ENCODE measurements at regions of chr16 and their contacts with region 1.

Region 1: GRCh38 chr16:54929090-54930004 is 1.3 kb upstream of the IRX5 start:
- DNase-seq: peak; percentile 100
- H3K4me3 ChIP-seq: peak overlapping the region; percentile 76
- H3K4me3 Mint-ChIP-seq: peak overlapping the region; percentile 96
- H3K27ac Mint-ChIP-seq: peak overlapping the region; percentile 89
- H3K4me1 ChIP-seq: peaks cover 24% of the 10 kb centered on the region
- H3K4me1 Mint-ChIP-seq: peaks cover 27% of the 10 kb centered on the region
- H3K27me3 ChIP-seq: no peaks in the 10 kb centered on the region
- H3K27me3 Mint-ChIP-seq: no peaks in the 10 kb centered on the region
- CTCF ChIP-seq: peak in 1 of 2 experiments; percentile 23

Region 2: DNA sequence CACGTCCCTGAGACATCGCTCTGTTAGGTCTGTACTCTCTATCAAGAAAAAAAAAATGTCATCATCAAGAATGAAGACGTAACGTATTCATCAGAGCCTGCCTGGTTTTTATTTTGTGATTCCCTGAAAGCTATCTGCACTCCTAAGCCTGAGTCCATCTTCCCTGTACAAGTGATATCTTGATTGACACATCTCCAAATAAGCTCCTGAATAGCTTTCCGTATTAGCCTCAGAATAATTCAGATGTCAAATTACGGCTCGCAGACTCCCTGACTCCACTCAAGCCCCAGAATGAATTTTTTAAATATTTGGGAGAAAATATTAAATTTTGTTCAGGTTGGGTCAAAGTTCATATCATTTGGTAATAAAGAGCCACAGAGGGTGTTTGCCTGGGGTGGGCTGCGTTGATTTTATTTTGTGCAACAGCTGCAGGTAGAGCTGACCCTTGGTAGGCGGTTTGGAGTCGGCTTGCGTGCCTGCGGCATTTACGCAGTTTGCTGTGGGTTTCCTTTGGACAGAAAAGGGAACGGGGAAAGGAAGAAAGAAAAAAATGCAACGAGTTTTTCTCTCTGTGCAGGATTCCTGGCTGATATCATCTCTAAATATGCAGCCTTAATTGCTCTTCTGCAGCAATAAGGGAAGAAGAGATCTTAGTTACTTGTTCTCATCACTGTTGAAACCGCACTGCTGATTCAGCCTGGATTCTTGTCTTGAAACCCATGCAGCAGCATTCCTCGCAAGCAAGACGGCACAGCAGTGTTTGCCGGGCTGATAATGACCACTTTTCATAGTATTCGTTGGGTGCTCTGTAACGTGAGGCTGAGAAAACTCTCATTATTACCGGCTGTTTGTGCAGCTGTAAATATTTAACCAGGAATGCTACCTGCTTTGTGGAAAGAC is 757.5 kb before region 1 on chr16:
- CTCF ChIA-PET with region 1: no interaction called
- POLR2A ChIA-PET with region 1: no interaction called
- intact Hi-C with region 1: loop called (anchors 5 kb)
- DNase-seq: peak; percentile 69 to 76
- H3K4me3 ChIP-seq: peak overlapping the region; percentile 22
- H3K4me3 Mint-ChIP-seq: peak overlapping the region; percentile 54
- H3K27ac Mint-ChIP-seq: no peak overlapping the region
- H3K4me1 ChIP-seq: peaks cover 48% of the 10 kb centered on the region
- H3K4me1 Mint-ChIP-seq: peaks cover 39% of the 10 kb centered on the region
- H3K27me3 ChIP-seq: no peaks in the 10 kb centered on the region
- H3K27me3 Mint-ChIP-seq: no peaks in the 10 kb centered on the region
- CTCF ChIP-seq: no peak

Region 3: DNA sequence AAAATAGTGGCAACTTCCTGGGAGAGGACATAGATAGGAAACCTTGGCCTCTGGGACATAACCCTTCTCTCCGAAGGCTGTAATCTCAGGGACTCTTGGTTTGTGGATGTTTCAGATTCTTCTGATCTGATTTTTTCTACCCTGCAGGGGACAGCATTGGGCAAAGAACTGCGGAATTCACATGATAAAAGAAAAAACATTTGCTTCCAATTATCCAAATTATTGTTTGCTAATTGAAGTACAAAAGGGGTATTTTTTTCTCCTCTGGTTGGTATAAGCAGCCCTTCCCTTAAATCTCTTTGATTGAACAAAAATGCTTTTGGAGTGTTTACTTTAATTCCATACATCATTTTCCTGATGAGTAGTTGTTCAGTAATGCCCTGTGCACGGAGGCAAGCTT is 391.1 kb before region 1 on chr16:
- CTCF ChIA-PET with region 1: interaction called, 4 read pairs
- POLR2A ChIA-PET with region 1: no interaction called
- intact Hi-C with region 1: loop called (anchors 2 kb)
- DNase-seq: peak in 1 of 2 experiments; percentile 31
- H3K4me3 ChIP-seq: no peak overlapping the region
- H3K4me3 Mint-ChIP-seq: no peak overlapping the region
- H3K27ac Mint-ChIP-seq: no peak overlapping the region
- H3K4me1 ChIP-seq: peaks cover 23% of the 10 kb centered on the region
- H3K4me1 Mint-ChIP-seq: peaks cover 8% of the 10 kb centered on the region
- H3K27me3 ChIP-seq: no peaks in the 10 kb centered on the region
- H3K27me3 Mint-ChIP-seq: no peaks in the 10 kb centered on the region
- CTCF ChIP-seq: peak; percentile 41 to 61

Region 4: GRCh38 chr16:54817446-54817845 is 111.9 kb before region 1 on chr16:
- CTCF ChIA-PET with region 1: interaction called, 3 read pairs
- POLR2A ChIA-PET with region 1: interaction called, 5 read pairs
- intact Hi-C with region 1: loop called (anchors 5 kb)
- DNase-seq: peak in 1 of 2 experiments; percentile 35
- H3K4me3 ChIP-seq: no peak overlapping the region
- H3K4me3 Mint-ChIP-seq: no peak overlapping the region
- H3K27ac Mint-ChIP-seq: peak overlapping the region; percentile 82
- H3K4me1 ChIP-seq: peaks cover 20% of the 10 kb centered on the region
- H3K4me1 Mint-ChIP-seq: peaks cover 23% of the 10 kb centered on the region
- H3K27me3 ChIP-seq: no peaks in the 10 kb centered on the region
- H3K27me3 Mint-ChIP-seq: no peaks in the 10 kb centered on the region
- CTCF ChIP-seq: peak; percentile 38 to 72

Region 5: DNA sequence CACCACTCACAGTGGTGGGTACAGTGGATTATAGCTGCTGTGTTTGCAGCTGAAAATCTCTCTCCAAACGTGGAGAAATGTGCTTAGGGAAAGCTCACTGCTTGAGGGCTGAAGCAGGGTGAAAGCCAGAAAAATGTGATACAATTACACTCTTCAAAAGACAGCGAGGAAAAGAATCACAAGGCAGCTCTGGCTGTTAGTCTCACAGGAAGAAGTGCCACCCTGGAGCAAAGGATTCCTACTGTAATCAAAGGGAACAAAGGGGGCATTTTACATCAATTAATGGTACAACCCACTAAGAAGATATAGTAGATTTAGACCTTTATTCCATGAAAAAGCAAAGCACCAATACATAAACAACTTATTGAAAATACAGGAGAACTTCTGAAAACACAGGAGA is 46.8 kb before region 1 on chr16:
- CTCF ChIA-PET with region 1: no interaction called
- POLR2A ChIA-PET with region 1: no interaction called
- intact Hi-C with region 1: no loop called
- DNase-seq: no peak
- H3K4me3 ChIP-seq: no peak overlapping the region
- H3K4me3 Mint-ChIP-seq: no peak overlapping the region
- H3K27ac Mint-ChIP-seq: no peak overlapping the region
- H3K4me1 ChIP-seq: no peaks in the 10 kb centered on the region
- H3K4me1 Mint-ChIP-seq: no peaks in the 10 kb centered on the region
- H3K27me3 ChIP-seq: no peaks in the 10 kb centered on the region
- H3K27me3 Mint-ChIP-seq: no peaks in the 10 kb centered on the region
- CTCF ChIP-seq: no peak

Region 6: DNA sequence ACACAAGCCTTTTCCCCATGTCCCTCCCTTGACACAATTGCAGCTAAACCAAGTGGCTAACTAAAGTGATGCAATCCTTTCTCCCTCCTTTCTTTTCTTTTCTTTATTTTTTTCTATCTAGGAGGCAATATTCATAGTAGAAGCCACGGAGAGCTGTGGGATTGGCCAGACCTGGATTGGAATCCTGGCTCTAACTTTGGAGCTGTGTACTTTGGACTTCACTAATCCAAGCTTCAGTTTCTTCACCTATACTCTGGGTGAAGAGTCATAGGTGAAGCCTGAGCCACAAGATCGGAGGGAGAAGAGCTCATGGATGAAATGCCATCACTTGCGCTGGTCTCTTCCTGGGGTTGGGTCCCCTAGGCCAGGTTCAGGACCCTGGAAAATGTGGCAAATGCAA is 178.5 kb after region 1 on chr16:
- CTCF ChIA-PET with region 1: interaction called, 6 read pairs
- POLR2A ChIA-PET with region 1: interaction called, 3 read pairs
- intact Hi-C with region 1: loop called (anchors 5 kb)
- DNase-seq: peak; percentile 69 to 76
- H3K4me3 ChIP-seq: no peak overlapping the region
- H3K4me3 Mint-ChIP-seq: peak overlapping the region; percentile 39
- H3K27ac Mint-ChIP-seq: peak overlapping the region; percentile 72
- H3K4me1 ChIP-seq: peaks cover 35% of the 10 kb centered on the region
- H3K4me1 Mint-ChIP-seq: peaks cover 28% of the 10 kb centered on the region
- H3K27me3 ChIP-seq: no peaks in the 10 kb centered on the region
- H3K27me3 Mint-ChIP-seq: no peaks in the 10 kb centered on the region
- CTCF ChIP-seq: no peak

Region 7: DNA sequence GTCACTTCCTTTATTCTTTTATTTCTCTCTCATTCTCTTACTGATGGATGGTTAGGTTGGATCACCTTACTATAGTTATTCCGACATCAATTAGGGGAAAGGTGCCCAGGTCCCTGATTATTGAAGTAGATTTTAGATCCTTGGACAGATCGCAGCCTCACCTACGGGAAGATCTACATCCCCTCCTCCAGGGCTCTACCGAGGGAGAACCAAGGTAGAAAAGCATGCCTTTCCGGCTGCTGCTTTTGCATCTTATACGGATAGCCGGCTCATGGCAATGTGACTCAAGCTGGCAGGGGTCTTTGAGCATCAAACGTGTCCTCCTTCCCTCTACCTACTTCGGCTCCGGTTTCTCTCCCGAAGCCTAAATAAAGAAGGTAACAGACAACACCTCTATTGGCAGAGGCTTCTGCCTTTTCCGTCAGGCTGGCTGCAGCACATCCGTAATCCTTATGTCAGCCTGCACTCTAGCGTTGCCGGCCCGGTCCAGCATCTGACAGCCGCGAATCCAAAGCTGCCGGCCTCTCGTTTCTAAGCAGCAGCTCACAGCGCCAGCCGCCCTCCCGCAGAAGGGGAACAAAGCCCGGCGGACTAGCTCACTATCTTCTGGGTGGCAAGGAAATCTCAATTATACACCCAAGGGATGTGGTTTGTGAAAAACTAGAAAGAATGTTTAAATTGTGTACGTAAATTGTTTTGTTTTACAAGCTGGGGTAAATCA is 441.6 kb after region 1 on chr16:
- CTCF ChIA-PET with region 1: no interaction called
- POLR2A ChIA-PET with region 1: no interaction called
- intact Hi-C with region 1: loop called (anchors 10 kb)
- DNase-seq: peak; percentile 68 to 73
- H3K4me3 ChIP-seq: no peak overlapping the region
- H3K4me3 Mint-ChIP-seq: no peak overlapping the region
- H3K27ac Mint-ChIP-seq: no peak overlapping the region
- H3K4me1 ChIP-seq: no peaks in the 10 kb centered on the region
- H3K4me1 Mint-ChIP-seq: peaks cover 8% of the 10 kb centered on the region
- H3K27me3 ChIP-seq: no peaks in the 10 kb centered on the region
- H3K27me3 Mint-ChIP-seq: peaks cover 7% of the 10 kb centered on the region
- CTCF ChIP-seq: peak in 1 of 2 experiments; percentile 73

Measured in Caco-2 (cell line).